Stomach (tissue), 19 donors: ENCODE measurements at regions of chr10 and their contacts with region 1.

Region 1: GRCh38 chr10:91643700-91644099 is 10.8 kb upstream of the PPP1R3C start:
- DNase-seq: peak; percentile 33 to 47
- H3K4me3 ChIP-seq: no peak overlapping the region
- H3K27ac ChIP-seq: no peak overlapping the region
- H3K4me1 ChIP-seq: no peaks in the 10 kb centered on the region
- H3K27me3 ChIP-seq: peaks cover 0 to 19% (median 0%) of the 10 kb centered on the region in 3 donors
- CTCF ChIP-seq: peak in 5 of 7 experiments; percentile 14 to 59 (median 29)
- EP300 ChIP-seq: no peak
- POLR2A ChIP-seq: no peak

Region 2: GRCh38 chr10:91745074-91745832 is 101.6 kb after region 1 on chr10:
- intact Hi-C with region 1: loop called (anchors 10 kb)
- DNase-seq: peak; percentile 39 to 53
- H3K4me3 ChIP-seq: no peak overlapping the region
- H3K27ac ChIP-seq: no peak overlapping the region
- H3K4me1 ChIP-seq: peaks cover 0 to 5% (median 0%) of the 10 kb centered on the region in 4 donors
- H3K27me3 ChIP-seq: peaks cover 0 to 7% (median 0%) of the 10 kb centered on the region in 3 donors
- CTCF ChIP-seq: peak in 2 of 7 experiments; percentile 17 to 36
- EP300 ChIP-seq: no peak
- POLR2A ChIP-seq: no peak

Region 3: GRCh38 chr10:92181575-92181974 is 537.9 kb after region 1 on chr10:
- intact Hi-C with region 1: no loop called
- DNase-seq: peak in 1 of 2 donors; percentile 27
- H3K4me3 ChIP-seq: no peak overlapping the region
- H3K27ac ChIP-seq: no peak overlapping the region
- H3K4me1 ChIP-seq: peaks cover 0 to 8% (median 0%) of the 10 kb centered on the region in 4 donors
- H3K27me3 ChIP-seq: no peaks in the 10 kb centered on the region
- CTCF ChIP-seq: no peak
- EP300 ChIP-seq: no peak
- POLR2A ChIP-seq: no peak